Heart left ventricle (tissue), 16 donors: ENCODE measurements at regions of chr3 and their contacts with region 1.

Region 1: DNA sequence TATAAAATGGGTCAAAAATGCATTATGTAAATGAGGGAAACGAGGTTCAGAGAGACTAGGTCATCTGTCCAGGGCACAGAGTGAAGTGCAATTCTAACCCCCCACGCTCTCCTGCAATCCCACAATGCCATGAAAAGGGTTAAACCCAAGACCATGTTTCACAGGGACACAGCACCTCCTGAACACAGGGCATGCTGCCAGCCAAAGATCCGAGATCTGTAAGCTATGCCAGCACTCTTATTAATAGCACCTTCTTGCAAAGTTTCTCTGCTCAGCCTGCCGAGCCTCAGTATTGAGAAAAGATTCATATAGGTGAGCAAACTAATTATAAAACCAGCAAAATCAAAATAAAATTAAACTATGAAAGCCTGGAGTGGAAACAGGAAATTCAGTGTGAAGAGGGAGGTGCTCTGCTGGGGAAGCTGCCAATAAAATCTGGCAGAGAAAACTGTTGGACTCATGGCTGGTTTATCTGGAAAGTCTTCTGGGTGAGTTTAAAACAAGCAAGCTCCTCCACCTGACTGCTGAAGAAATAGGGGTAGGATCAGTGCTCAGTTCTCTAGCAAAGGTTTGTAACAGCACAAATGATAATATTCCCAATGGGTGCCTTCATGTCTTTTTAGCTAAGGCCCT is 50.3 kb downstream of the LRIG1 start:
- DNase-seq: peak in 4 of 5 donors; percentile 65 to 84 (median 74)
- ATAC-seq: peak in 3 of 4 donors; percentile 54 to 73 (median 60)
- H3K4me3 ChIP-seq: peak overlapping the region in 9 of 12 donors; percentile 2 to 32 (median 12)
- H3K27ac ChIP-seq: peak overlapping the region in 11 of 12 donors; percentile 56 to 86 (median 79)
- H3K4me1 ChIP-seq: peaks cover 30 to 83% (median 73%) of the 10 kb centered on the region in 12 donors
- H3K27me3 ChIP-seq: no peaks in the 10 kb centered on the region
- CTCF ChIP-seq: no peak
- POLR2A ChIP-seq: no peak

Region 2: DNA sequence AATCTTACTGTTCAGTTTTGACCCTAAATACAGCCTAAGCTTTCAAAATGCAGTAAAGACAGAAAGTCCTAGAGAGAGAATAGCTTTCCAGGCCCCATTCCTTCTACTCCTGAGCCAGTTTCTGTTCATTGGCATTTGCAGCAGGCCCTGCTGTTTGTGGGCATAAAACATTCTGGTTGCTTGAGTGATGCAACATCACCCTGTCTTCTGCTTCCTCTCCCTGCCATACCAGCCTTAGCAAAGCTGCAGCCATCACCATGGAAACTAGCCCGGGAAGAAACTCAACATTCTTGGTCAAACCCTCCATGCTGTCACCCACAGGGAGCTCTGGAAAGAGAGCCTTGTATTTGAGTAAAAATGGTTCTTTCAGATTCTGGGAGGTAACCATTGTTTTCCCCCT is 737.5 kb before region 1 on chr3:
- intact Hi-C with region 1: no loop called
- DNase-seq: no peak
- ATAC-seq: no peak
- H3K4me3 ChIP-seq: no peak overlapping the region
- H3K27ac ChIP-seq: no peak overlapping the region
- H3K4me1 ChIP-seq: peaks cover 0 to 51% (median 19%) of the 10 kb centered on the region in 12 donors
- H3K27me3 ChIP-seq: no peaks in the 10 kb centered on the region
- CTCF ChIP-seq: no peak
- POLR2A ChIP-seq: no peak

Region 3: DNA sequence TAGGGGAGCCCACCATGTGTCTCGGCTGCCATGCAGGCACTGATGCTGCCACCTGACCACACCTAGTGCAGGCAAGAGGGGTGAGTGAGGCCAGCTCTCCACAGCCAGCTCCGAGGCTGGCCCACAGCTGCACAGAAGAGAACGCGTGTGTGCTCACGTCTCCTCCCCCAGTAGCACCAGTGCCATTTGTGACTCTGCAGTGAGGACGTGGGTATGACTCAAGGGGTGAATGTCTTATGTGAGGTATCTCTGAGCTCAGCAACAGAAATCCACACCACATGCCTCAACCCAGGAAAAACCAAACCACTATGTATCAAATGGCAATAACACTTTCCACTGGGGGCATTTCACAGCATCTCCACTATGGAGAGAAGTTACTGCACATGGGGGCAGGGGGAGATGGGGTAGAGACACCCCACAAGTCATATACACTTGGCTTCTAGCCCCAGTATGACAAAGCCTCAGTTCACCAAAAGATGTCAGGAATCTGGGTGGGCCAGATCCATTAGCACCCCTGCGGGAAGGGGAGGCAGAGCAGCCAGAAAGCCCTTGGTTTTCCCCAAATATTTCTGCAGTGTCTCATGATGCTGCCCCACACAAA is 37.3 kb before region 1 on chr3:
- intact Hi-C with region 1: loop called in 3 of 10 experiments (anchors 5 kb)
- DNase-seq: no peak
- ATAC-seq: peak in 1 of 4 donors; percentile 9
- H3K4me3 ChIP-seq: no peak overlapping the region
- H3K27ac ChIP-seq: peak overlapping the region in 9 of 12 donors; percentile 11 to 94 (median 78)
- H3K4me1 ChIP-seq: peaks cover 0 to 96% (median 50%) of the 10 kb centered on the region in 12 donors
- H3K27me3 ChIP-seq: no peaks in the 10 kb centered on the region
- CTCF ChIP-seq: no peak
- POLR2A ChIP-seq: no peak

Region 4: DNA sequence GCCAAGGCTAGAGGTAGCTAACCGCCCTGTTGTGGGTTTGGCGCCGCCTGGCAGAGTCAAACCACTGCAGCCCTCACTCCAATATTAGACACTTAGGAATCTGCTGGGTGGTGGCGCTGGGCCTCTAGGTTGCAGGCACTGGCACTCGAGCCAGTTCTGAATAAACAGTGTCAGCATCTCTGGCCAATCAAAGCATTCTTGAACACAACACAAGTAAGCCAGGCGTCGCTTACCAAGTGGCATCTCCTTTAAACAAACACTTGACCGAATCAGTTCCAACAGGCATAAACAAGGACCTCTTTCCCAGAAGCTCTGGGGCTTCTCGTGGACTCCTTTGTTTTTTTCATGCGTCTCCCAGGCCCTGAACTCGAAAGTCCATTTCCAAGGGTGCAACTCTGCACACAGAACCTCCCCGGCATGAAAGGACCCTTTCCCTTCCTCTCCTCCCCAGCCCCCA is 32.0 kb before region 1 on chr3:
- intact Hi-C with region 1: loop called in 3 of 10 experiments (anchors 5 kb)
- DNase-seq: peak in 1 of 5 donors; percentile 55
- ATAC-seq: peak; percentile 45 to 71 (median 68)
- H3K4me3 ChIP-seq: no peak overlapping the region
- H3K27ac ChIP-seq: peak overlapping the region in 10 of 12 donors; percentile 3 to 88 (median 54)
- H3K4me1 ChIP-seq: peaks cover 0 to 79% (median 37%) of the 10 kb centered on the region in 12 donors
- H3K27me3 ChIP-seq: no peaks in the 10 kb centered on the region
- CTCF ChIP-seq: peak in 6 of 12 donors; percentile 10 to 49 (median 27)
- POLR2A ChIP-seq: no peak

Region 5: GRCh38 chr3:66483406-66483906 is 33.0 kb after region 1 on chr3:
- intact Hi-C with region 1: loop called in 1 of 10 experiments (anchors 5 kb)
- DNase-seq: peak; percentile 53 to 74 (median 67)
- ATAC-seq: peak; percentile 54 to 78 (median 60)
- H3K4me3 ChIP-seq: peak overlapping the region in 1 of 12 donors; percentile 11
- H3K27ac ChIP-seq: peak overlapping the region; percentile 70 to 98 (median 86)
- H3K4me1 ChIP-seq: peaks cover 24 to 99% (median 90%) of the 10 kb centered on the region in 12 donors
- H3K27me3 ChIP-seq: no peaks in the 10 kb centered on the region
- CTCF ChIP-seq: no peak
- POLR2A ChIP-seq: no peak

Region 6: DNA sequence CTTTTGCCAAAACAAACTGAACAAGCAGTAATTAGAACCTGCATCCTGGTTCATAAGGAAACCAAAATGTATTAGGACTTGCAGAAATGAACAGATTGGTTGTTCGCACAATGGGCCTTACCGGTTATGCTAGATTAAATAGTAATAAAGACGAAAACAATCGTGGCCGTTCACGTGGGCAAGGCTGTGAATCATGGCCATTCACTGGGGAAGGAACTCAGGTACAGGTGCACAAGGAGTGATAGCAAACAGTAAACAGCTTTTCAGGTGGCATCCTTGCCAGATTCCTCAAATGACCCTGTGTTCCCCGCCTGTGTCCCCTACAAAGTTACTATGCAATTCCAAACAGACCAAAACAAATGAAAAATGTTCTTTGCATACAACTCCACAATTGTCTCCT is 42.2 kb after region 1 on chr3:
- intact Hi-C with region 1: loop called in 8 of 10 experiments (anchors 2 to 5 kb)
- DNase-seq: no peak
- ATAC-seq: peak in 1 of 4 donors; percentile 23
- H3K4me3 ChIP-seq: no peak overlapping the region
- H3K27ac ChIP-seq: peak overlapping the region in 9 of 12 donors; percentile 7 to 98 (median 31)
- H3K4me1 ChIP-seq: peaks cover 11 to 96% (median 81%) of the 10 kb centered on the region in 12 donors
- H3K27me3 ChIP-seq: no peaks in the 10 kb centered on the region
- CTCF ChIP-seq: no peak
- POLR2A ChIP-seq: no peak

Region 7: GRCh38 chr3:66500576-66501482 is 50.3 kb after region 1 on chr3 and contains the start of gene LRIG1:
- intact Hi-C with region 1: loop called in 8 of 10 experiments (anchors 2 to 5 kb)
- DNase-seq: peak; percentile 100
- ATAC-seq: peak; percentile 96 to 97 (median 97)
- H3K4me3 ChIP-seq: peak within 1 kb of the TSS; percentile 81 to 98 (median 92)
- H3K27ac ChIP-seq: peak within 1 kb of the TSS; percentile 90 to 98 (median 94)
- H3K4me1 ChIP-seq: peaks cover 0 to 45% (median 36%) of the 10 kb centered on the region in 12 donors
- H3K27me3 ChIP-seq: no peaks in the 10 kb centered on the region
- CTCF ChIP-seq: peak; percentile 20 to 69 (median 51)
- POLR2A ChIP-seq: peak; percentile 33 to 86
- total RNA-seq, gene LRIG1: 71.0 to 161 (median 98.3) TPM